ENCODE measurements at regions of chr7 and their contacts with region 1.

Region 1: GRCh38 chr7:2632733-2633537 is 1.1 kb downstream of the TTYH3 start:
- DNase-seq: peak; percentile 77
- ATAC-seq: peak; percentile 7
- H3K4me3 Mint-ChIP-seq: peak overlapping the region; percentile 91
- H3K27ac Mint-ChIP-seq: peak overlapping the region; percentile 84
- H3K4me1 Mint-ChIP-seq: peaks cover 14% of the 10 kb centered on the region
- H3K27me3 Mint-ChIP-seq: no peaks in the 10 kb centered on the region

Region 2: DNA sequence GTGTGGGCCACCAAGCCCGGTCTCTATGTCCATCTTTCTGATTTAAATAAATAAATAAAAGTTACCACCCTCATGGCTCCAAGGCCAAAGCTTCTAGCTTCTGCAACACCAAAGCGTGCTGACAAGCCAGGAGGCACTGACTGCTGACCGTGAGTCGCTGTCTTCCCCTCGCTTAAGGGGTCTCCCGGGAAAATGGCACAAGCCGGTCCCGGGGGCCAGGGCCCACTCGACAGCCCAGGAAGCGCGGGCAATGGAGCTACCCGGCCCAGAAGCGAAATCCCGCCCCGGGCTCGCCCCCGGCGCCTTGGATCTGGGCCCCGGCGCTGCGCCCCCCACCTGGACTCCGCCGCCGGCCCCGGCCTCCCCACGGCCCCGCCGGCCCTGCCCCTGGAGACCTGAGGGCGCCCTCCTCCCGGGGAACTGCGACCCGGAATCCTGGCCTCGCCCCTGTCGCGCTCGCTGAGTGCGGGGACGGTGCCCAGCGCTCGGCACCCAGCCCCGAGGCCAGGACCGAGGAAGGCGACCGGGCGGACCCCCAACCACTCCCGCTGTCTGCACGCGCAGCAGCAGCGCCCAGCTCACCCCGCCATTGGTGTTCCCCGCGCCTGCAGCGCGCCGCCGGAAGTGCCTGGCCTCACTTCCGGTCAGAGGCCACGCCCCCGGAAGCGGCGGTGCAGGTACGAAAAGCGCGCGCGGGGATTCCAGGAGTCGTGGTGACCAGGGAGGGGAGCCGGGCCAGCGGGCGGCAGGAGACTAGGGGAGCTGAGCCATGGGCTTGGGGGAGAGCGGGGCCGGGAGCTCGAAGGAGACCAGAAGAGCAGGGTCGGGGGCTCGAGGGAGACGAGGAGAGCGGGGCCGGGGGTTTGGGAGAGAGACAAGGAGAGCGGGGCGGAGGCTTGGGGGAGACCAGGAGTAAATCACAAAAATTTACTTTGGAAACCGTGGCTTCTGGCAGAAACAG is 391.1 kb before region 1 on chr7 and contains the starts of genes MRM2 and NUDT1:
- CTCF ChIA-PET with region 1: no interaction called
- POLR2A ChIA-PET with region 1: no interaction called
- intact Hi-C with region 1: loop called in 1 of 2 experiments (anchors 5 kb)
- DNase-seq: peak; percentile 84
- ATAC-seq: peak; percentile 82
- H3K4me3 Mint-ChIP-seq: peak within 1 kb of the TSS; percentile 88
- H3K27ac Mint-ChIP-seq: peak within 1 kb of the TSS; percentile 88
- H3K4me1 Mint-ChIP-seq: peaks cover 10% of the 10 kb centered on the region
- H3K27me3 Mint-ChIP-seq: no peaks in the 10 kb centered on the region
- total RNA-seq, gene MRM2: 28.7 to 32.1 TPM
- total RNA-seq, gene NUDT1: 52.5 to 100 TPM

Region 3: DNA sequence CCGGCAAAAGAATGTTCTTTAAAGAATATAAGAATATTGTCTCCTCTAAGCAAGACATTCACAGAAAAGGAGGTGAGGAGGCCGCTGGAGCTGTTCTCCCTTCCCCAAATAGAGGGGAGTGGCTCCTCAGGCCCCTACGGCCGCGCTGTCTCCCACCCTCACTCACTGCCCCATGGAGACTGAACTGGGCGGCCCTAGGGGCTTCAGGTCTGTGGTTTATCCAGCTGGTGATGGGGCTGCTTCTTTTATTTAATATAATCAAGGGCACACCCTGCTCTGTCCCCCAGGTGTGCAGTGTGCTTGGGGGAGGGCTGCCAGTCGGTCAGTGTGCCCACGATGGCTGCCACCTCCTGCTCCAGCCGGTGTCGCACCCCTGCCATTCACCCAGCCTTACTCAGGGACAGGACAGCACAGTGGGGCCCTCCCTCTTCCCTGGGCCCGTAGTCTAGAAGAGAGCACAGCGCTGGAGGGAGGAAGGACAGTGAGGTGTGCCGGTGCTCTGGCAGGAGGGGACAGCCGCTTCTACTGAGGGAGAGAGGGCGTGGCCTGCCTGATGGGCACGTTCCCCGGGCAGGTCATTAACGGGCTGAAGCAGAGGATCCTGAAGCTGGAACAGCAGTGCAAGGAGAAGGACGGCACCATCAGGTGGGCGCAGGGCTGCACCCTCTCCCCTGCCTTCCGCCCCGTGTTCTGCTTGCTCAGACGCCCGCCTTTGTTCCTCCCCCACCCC is 50.8 kb before region 1 on chr7:
- CTCF ChIA-PET with region 1: no interaction called
- POLR2A ChIA-PET with region 1: no interaction called
- intact Hi-C with region 1: no loop called
- DNase-seq: no peak
- ATAC-seq: no peak
- H3K4me3 Mint-ChIP-seq: no peak overlapping the region
- H3K27ac Mint-ChIP-seq: no peak overlapping the region
- H3K4me1 Mint-ChIP-seq: no peaks in the 10 kb centered on the region
- H3K27me3 Mint-ChIP-seq: no peaks in the 10 kb centered on the region